Dorsolateral prefrontal cortex (tissue), 120 donors: ENCODE measurements at regions of chr11 and their contacts with region 1.

Region 1: DNA sequence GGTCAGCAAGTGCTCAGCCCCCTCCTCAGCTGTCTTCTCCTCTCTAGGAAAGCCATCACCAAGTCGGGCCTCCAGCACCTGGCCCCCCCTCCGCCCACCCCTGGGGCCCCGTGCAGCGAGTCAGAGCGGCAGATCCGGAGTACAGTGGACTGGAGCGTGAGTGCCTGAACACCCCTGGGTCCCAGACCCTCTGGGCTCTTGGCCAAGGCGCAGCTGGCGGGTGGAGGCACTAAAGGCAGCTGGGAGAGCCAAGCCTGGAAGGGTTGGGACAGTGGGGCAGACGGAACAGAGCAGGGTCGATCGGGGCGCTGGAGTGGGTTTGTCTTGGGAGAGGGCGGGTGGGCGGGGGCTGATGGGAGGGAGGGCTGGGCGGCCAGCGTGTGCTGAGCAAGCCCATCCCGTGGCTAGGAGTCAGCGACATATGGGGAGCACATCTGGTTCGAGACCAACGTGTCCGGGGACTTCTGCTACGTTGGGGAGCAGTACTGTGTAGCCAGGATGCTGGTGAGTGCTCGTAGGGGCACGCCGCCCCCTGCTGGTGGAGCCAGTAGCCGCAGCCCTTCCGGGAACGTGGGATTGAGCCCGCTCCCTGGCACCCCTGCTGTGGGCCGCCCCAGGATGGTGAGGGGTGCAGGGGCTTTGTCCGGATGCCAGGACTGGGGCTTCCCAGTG is 14.1 kb upstream of the MDK start:
- DNase-seq: peak in 9 of 10 donors; percentile 61 to 87 (median 77)
- H3K4me3 ChIP-seq: peak overlapping the region in 26 of 59 donors; percentile 1 to 65 (median 22)
- H3K27ac ChIP-seq: peak overlapping the region in 58 of 59 donors; percentile 20 to 99 (median 96)
- H3K27me3 ChIP-seq: no peaks in the 10 kb centered on the region
- CTCF ChIP-seq: peak; percentile 84 to 99 (median 96)

Region 2: GRCh38 chr11:46333394-46333947 is 33.9 kb before region 1 on chr11:
- intact Hi-C with region 1: no loop called
- DNase-seq: peak in 1 of 10 donors; percentile 50
- H3K4me3 ChIP-seq: peak overlapping the region; percentile 30 to 76 (median 60)
- H3K27ac ChIP-seq: peak overlapping the region in 56 of 59 donors; percentile 11 to 93 (median 78)
- H3K27me3 ChIP-seq: peaks cover 0 to 46% (median 4%) of the 10 kb centered on the region in 45 donors
- CTCF ChIP-seq: no peak

Region 3: GRCh38 chr11:46346886-46347636 is 20.3 kb before region 1 on chr11 and contains the start of gene DGKZ:
- intact Hi-C with region 1: loop called in 1 of 2 experiments (anchors 1 kb)
- DNase-seq: peak; percentile 78 to 95 (median 88)
- H3K4me3 ChIP-seq: peak within 1 kb of the TSS; percentile 42 to 90 (median 79)
- H3K27ac ChIP-seq: peak within 1 kb of the TSS in 56 of 59 donors; percentile 15 to 91 (median 82)
- H3K27me3 ChIP-seq: no peaks in the 10 kb centered on the region
- CTCF ChIP-seq: peak; percentile 31 to 92 (median 71)
- total RNA-seq, gene DGKZ: 142 to 475 (median 319) TPM

Region 4: GRCh38 chr11:46352063-46352841 is 15.1 kb before region 1 on chr11:
- intact Hi-C with region 1: loop called in 1 of 2 experiments (anchors 1 kb)
- DNase-seq: peak in 3 of 10 donors; percentile 32 to 81 (median 72)
- H3K4me3 ChIP-seq: peak overlapping the region in 53 of 59 donors; percentile 2 to 90 (median 37)
- H3K27ac ChIP-seq: peak overlapping the region in 58 of 59 donors; percentile 24 to 91 (median 82)
- H3K27me3 ChIP-seq: no peaks in the 10 kb centered on the region
- CTCF ChIP-seq: peak; percentile 65 to 99 (median 94)

Region 5: GRCh38 chr11:46760429-46761128 is 393.2 kb after region 1 on chr11:
- intact Hi-C with region 1: loop called in 1 of 2 experiments (anchors 10 kb)
- DNase-seq: no peak
- H3K4me3 ChIP-seq: no peak overlapping the region
- H3K27ac ChIP-seq: peak overlapping the region in 32 of 59 donors; percentile 11 to 77 (median 44)
- H3K27me3 ChIP-seq: no peaks in the 10 kb centered on the region
- CTCF ChIP-seq: no peak